Natural killer cell (primary cell): ENCODE measurements at regions of chr14 and their contacts with region 1.

Region 1: GRCh38 chr14:50417853-50418252 is 21.2 kb upstream of the CDKL1 start:
- DNase-seq: no peak
- ATAC-seq: no peak
- H3K4me3 ChIP-seq: no peak overlapping the region
- H3K4me3 Mint-ChIP-seq: no peak overlapping the region
- H3K27ac ChIP-seq: no peak overlapping the region
- H3K27ac Mint-ChIP-seq: no peak overlapping the region
- H3K4me1 ChIP-seq: no peaks in the 10 kb centered on the region
- H3K4me1 Mint-ChIP-seq: no peaks in the 10 kb centered on the region
- H3K27me3 ChIP-seq: no peaks in the 10 kb centered on the region
- H3K27me3 Mint-ChIP-seq: no peaks in the 10 kb centered on the region
- CTCF ChIP-seq: no peak

Region 2: DNA sequence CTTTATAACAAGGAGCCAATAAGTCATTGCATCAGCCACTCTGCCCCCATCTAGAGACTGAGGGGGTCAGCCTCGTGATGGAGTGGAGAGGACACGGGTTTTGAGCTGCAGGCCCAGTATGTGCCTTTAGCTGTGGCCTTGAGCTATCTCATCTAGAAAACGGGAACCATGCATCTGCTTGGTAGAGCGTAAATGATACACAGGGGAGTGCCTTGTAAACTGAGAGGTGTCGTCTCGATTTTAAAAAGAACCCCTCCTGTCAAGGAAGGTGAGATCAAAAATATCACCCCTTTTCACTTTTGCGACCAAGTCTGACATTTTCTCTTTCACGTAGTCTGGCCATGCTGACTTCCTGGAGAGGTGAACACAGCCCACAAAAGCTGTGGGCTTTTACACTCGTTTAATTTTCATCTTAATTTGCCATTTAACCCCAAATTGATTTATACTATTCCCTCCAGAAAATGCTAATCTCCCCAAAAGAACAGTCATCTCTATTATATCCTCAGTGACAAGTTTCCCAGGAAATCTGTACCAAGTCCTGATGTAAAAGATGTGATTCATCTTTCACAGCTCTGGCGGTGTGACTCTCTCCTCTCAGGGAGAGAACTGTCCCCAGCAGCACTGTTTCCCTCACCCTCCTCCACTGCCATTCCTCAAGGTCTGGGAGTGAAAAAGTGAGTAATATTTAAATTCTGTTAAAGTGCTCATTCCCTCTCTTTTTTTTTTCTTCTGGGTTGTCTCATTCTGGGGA is 332.1 kb before region 1 on chr14:
- intact Hi-C with region 1: no loop called
- DNase-seq: peak; percentile 36 to 70
- ATAC-seq: peak; percentile 53 to 66 (median 56)
- H3K4me3 ChIP-seq: no peak overlapping the region
- H3K4me3 Mint-ChIP-seq: peak overlapping the region; percentile 14
- H3K27ac ChIP-seq: peak overlapping the region; percentile 95
- H3K27ac Mint-ChIP-seq: peak overlapping the region; percentile 86 to 87
- H3K4me1 ChIP-seq: peaks cover 72% of the 10 kb centered on the region
- H3K4me1 Mint-ChIP-seq: peaks cover 62 to 66% of the 10 kb centered on the region in 2 donors
- H3K27me3 ChIP-seq: no peaks in the 10 kb centered on the region
- H3K27me3 Mint-ChIP-seq: no peaks in the 10 kb centered on the region
- CTCF ChIP-seq: no peak

Region 3: GRCh38 chr14:50469982-50470381 is 52.1 kb after region 1 on chr14:
- intact Hi-C with region 1: loop called (anchors 1 kb)
- DNase-seq: no peak
- ATAC-seq: no peak
- H3K4me3 ChIP-seq: no peak overlapping the region
- H3K4me3 Mint-ChIP-seq: no peak overlapping the region
- H3K27ac ChIP-seq: no peak overlapping the region
- H3K27ac Mint-ChIP-seq: peak overlapping the region; percentile 49 to 74
- H3K4me1 ChIP-seq: peaks cover 3% of the 10 kb centered on the region
- H3K4me1 Mint-ChIP-seq: peaks cover 23 to 24% of the 10 kb centered on the region in 2 donors
- H3K27me3 ChIP-seq: no peaks in the 10 kb centered on the region
- H3K27me3 Mint-ChIP-seq: no peaks in the 10 kb centered on the region
- CTCF ChIP-seq: no peak

Region 4: DNA sequence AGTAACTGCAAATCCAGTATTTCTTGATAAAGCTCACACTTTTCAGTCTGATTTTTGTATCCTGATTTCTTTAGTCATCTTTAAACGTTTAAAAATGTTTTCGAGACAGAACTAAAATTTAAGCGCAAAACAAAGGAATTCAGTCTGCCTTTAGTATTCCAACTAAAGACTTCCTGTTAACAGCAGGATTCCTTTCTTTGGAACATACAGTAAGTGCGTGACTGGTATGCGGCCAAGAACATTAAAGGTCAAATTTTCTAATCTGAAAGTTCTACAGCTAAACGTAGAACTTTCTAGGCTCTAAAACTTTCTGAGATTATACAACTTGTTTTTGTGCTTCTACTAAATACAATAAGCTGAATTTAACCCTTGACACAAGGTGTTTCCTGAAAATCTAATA is 240.3 kb after region 1 on chr14:
- intact Hi-C with region 1: no loop called
- DNase-seq: no peak
- ATAC-seq: no peak
- H3K4me3 ChIP-seq: no peak overlapping the region
- H3K4me3 Mint-ChIP-seq: no peak overlapping the region
- H3K27ac ChIP-seq: no peak overlapping the region
- H3K27ac Mint-ChIP-seq: no peak overlapping the region
- H3K4me1 ChIP-seq: no peaks in the 10 kb centered on the region
- H3K4me1 Mint-ChIP-seq: peaks cover 9 to 10% of the 10 kb centered on the region in 2 donors
- H3K27me3 ChIP-seq: no peaks in the 10 kb centered on the region
- H3K27me3 Mint-ChIP-seq: peaks cover 0 to 7% of the 10 kb centered on the region in 2 donors
- CTCF ChIP-seq: no peak